Panc1 (cell line): ENCODE measurements at regions of chr1 and their contacts with region 1.

Region 1: DNA sequence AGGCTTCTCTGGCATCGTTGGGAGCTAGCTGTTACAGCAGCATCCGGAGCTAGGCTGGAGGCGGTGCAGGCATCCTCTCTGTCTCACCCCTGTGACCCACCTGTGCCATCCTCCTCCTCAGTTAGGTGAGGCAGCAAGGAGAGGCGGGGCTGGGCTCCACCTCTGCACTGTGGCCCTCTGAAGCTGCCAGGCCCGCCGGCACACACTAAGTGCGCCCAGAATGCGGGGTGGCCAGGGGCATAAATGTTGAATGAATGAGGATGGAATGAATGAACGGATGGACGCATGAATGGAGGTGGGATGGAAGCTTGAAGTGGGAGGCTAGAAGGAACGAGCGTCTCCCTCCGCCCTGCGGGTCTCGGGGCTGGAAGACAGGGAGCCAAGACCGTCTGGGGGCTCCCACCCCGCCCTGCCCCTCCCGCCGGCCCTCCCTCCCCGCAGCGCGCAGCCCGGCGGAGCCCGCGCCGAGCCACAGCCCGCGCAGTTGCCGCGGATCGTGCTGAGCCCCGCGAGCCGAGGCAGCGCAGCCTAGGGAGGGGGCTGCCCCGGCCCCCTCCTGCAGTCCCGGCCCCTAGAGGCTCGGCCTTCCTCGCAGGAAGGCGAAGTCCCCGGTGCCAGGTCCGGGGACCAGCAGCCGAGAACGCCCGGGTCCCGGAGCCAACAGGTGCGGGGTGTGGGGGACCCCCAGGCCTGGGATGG is at the start of gene HCRTR1:
- DNase-seq: no peak
- ATAC-seq: peak; percentile 23
- H3K4me3 ChIP-seq: peak within 1 kb of the TSS; percentile 45 to 47
- H3K27ac ChIP-seq: no peak within 1 kb of the TSS
- H3K4me1 ChIP-seq: peaks cover 3% of the 10 kb centered on the region
- H3K27me3 ChIP-seq: peaks cover 5% of the 10 kb centered on the region
- CTCF ChIP-seq: no peak
- total RNA-seq, gene HCRTR1: 0.18 TPM

Region 2: DNA sequence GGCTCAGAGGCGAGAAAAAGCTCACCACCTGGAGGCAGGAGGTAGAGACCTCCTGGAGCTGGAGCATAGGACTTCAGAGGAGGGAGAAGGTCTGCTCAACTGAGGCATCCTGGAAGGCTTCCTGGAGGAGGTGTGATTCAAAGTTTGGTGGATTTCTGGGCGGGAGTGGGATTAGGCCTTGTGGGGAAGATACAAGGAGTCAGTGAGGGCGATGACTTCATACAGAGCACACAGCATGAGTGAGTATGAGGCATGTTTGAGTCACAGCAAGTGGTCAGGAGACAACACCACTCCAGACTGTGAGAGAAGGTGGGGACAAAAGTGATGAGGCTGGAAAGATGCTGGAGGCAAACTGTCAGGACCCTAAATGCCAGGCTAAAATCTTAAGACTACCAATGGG is 971.6 kb before region 1 on chr1:
- CTCF ChIA-PET with region 1: no interaction called
- POLR2A ChIA-PET with region 1: interaction called, 15 read pairs
- in situ Hi-C with region 1: no loop called
- intact Hi-C with region 1: no loop called
- DNase-seq: peak; percentile 7
- ATAC-seq: peak; percentile 49; the same call in 1 of the 2 replicates
- H3K4me3 ChIP-seq: no peak overlapping the region
- H3K27ac ChIP-seq: no peak overlapping the region
- H3K4me1 ChIP-seq: no peaks in the 10 kb centered on the region
- H3K27me3 ChIP-seq: peaks cover 12% of the 10 kb centered on the region
- CTCF ChIP-seq: no peak

Region 3: DNA sequence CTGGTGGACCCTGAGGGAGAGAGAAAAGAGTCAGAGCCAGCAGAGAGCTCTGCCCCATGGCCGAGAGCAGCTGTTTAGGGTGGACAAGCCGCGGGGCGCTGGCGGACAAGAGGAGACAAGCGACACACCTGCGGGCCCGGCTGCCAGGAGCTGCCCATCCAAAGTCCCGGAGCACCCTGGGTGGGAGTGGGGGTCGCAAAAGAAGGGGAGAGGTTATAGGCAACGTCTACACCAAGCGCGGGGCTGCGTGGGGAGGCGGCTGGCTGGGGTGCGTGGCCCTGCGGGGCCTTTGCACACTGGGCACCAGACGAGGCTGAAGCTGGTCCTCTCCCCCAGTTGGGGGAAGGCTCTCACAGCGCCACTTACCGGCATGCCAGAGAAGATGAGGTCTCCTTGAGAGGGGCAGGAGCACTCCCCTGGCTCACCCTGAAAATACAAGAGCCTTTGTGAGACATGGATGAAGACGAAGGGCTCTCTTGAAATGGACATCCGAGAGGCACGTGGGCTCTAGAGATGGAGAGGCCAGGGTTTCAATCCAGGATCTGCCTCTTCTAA is 62.4 kb after region 1 on chr1:
- CTCF ChIA-PET with region 1: interaction called, 21 read pairs
- POLR2A ChIA-PET with region 1: no interaction called
- in situ Hi-C with region 1: no loop called
- intact Hi-C with region 1: no loop called
- DNase-seq: no peak
- ATAC-seq: no peak
- H3K4me3 ChIP-seq: no peak overlapping the region
- H3K27ac ChIP-seq: no peak overlapping the region
- H3K4me1 ChIP-seq: no peaks in the 10 kb centered on the region; the same call in 1 of the 2 replicates
- H3K27me3 ChIP-seq: no peaks in the 10 kb centered on the region
- CTCF ChIP-seq: no peak; the same call in 1 of the 2 replicates